Gastrocnemius medialis (tissue), 4 donors: ENCODE measurements at regions of chr3 and their contacts with region 1.

Region 1: DNA sequence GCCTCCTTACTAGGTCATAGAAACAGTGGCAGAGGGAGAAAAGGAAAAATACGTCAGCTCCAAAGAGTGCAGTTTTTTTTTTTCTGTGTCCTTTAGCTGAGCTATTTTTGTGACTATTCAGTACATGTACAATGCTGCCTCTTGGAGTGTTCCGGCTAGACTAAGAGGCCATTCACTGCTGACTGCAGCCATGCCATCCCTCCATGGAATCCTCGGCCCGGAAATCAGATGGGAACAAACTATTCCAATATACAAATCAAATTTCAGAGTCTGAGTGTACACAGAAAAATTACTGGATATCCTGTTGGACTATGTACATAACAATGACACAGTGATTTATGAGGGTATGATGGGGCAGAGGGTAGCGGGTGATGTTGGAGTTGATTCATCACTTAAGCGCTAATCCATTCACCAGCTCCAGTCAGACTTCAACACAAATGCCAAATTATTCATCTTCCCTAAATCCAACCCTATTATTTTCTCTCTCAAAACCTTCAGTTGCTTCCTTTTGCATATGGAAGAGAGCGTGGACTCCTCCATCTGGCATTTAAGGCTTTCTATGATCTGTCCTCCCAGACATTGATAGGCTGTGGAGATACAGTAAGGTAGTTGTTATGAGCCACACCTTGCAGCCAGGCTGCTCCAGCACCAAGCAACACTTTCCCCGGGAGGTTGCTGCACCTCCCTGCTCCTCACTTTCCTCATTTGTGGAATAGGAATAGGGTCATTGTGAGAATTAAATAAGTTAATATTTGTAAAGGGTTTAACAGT is 109.1 kb downstream of the LPP start:
- DNase-seq: peak; percentile 49 to 54
- ATAC-seq: peak; percentile 8 to 17
- H3K4me3 ChIP-seq: no peak overlapping the region
- H3K27ac ChIP-seq: peak overlapping the region; percentile 94 to 99 (median 96)
- H3K4me1 ChIP-seq: peaks cover 83 to 92% of the 10 kb centered on the region in 2 donors
- H3K27me3 ChIP-seq: no peaks in the 10 kb centered on the region
- CTCF ChIP-seq: no peak
- POLR2A ChIP-seq: peak in 1 of 2 donors; percentile 68

Region 2: DNA sequence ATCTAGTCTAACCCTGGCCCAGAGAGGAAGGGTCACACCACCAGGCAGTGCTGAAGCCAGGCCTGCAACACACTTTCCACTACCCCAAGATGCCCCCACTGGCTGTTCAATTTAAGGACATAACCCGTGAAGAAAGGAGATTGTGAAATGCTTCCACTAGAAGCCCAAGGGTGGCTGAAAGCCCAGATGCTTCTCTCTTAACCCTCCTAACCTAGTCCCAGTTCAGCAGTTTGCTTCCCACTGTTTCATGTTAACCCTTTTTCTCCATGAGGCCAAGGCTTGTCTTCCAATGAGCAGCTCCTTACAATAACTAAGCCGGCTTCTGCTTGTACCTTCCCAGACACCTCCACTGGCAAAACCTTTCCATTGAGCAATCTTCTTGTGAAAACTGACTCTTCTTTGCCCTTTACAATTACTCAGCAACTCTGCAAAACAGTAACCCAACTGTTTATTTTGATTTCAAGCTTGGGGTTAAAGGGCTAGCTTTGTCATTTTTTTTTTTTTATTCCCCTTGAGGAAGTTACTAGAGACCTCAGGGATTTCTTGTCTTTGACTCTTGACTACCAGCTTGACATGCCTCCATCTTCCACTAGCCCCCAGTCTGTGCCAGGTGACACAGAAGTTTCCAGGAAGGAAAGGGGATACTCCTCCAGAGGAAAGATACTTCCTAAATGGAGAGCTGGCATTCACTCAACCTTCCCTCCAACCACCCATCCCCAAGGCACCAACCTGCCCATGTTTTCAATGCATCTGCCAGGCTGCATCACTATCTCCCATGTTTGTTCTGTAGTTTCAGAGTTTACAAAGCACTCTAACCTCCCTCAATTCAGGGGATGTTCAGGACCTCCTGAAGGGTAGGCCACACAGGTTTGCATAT is 307.8 kb before region 1 on chr3:
- in situ Hi-C with region 1: no loop called
- intact Hi-C with region 1: loop called (anchors 5 kb)
- DNase-seq: peak; percentile 43 to 85
- ATAC-seq: peak; percentile 68 to 70
- H3K4me3 ChIP-seq: no peak overlapping the region
- H3K27ac ChIP-seq: peak overlapping the region; percentile 83 to 96 (median 94)
- H3K4me1 ChIP-seq: peaks cover 58 to 79% of the 10 kb centered on the region in 2 donors
- H3K27me3 ChIP-seq: no peaks in the 10 kb centered on the region
- CTCF ChIP-seq: no peak
- POLR2A ChIP-seq: no peak

Region 3: GRCh38 chr3:188076176-188076575 is 186.9 kb before region 1 on chr3:
- in situ Hi-C with region 1: no loop called
- intact Hi-C with region 1: loop called (anchors 5 kb)
- DNase-seq: peak; percentile 44 to 83
- ATAC-seq: peak; percentile 58 to 74
- H3K4me3 ChIP-seq: no peak overlapping the region
- H3K27ac ChIP-seq: peak overlapping the region; percentile 73 to 86 (median 82)
- H3K4me1 ChIP-seq: peaks cover 13 to 27% of the 10 kb centered on the region in 2 donors
- H3K27me3 ChIP-seq: no peaks in the 10 kb centered on the region
- CTCF ChIP-seq: no peak
- POLR2A ChIP-seq: no peak

Region 4: GRCh38 chr3:188220988-188221818 is 41.9 kb before region 1 on chr3:
- in situ Hi-C with region 1: no loop called
- intact Hi-C with region 1: loop called (anchors 1 kb)
- DNase-seq: peak; percentile 95 to 98
- ATAC-seq: peak; percentile 93 to 95
- H3K4me3 ChIP-seq: no peak overlapping the region
- H3K27ac ChIP-seq: peak overlapping the region; percentile 91 to 97 (median 93)
- H3K4me1 ChIP-seq: peaks cover 70% of the 10 kb centered on the region in 2 donors
- H3K27me3 ChIP-seq: no peaks in the 10 kb centered on the region
- CTCF ChIP-seq: no peak
- POLR2A ChIP-seq: peak; percentile 56 to 77

Region 5: DNA sequence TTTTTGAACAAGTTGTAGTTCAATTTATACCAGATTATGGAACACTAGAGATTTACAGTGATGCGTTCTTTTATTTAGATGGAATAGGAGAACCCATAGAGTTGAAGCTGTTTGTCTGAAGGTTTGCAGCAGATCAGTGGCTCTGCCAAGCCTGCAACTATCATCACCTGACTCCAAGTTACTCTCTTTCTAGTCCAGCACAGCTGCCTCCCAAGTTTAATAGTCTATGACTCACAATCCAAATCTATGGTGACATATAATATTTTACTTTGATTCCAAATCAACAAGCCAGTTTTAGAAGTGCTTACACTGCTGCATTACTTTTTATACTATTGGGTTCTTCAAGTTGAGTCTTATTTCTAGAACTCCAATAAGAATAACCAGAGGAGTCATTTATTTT is 291.3 kb after region 1 on chr3:
- in situ Hi-C with region 1: loop called in 1 of 4 experiments (anchors 10 kb)
- intact Hi-C with region 1: no loop called
- DNase-seq: peak; percentile 83 to 85
- ATAC-seq: peak; percentile 97
- H3K4me3 ChIP-seq: no peak overlapping the region
- H3K27ac ChIP-seq: peak overlapping the region; percentile 65 to 87 (median 78)
- H3K4me1 ChIP-seq: peaks cover 40 to 49% of the 10 kb centered on the region in 2 donors
- H3K27me3 ChIP-seq: no peaks in the 10 kb centered on the region
- CTCF ChIP-seq: no peak
- POLR2A ChIP-seq: no peak